ENCODE measurements at regions of chr3 and their contacts with region 1.

Region 1: DNA sequence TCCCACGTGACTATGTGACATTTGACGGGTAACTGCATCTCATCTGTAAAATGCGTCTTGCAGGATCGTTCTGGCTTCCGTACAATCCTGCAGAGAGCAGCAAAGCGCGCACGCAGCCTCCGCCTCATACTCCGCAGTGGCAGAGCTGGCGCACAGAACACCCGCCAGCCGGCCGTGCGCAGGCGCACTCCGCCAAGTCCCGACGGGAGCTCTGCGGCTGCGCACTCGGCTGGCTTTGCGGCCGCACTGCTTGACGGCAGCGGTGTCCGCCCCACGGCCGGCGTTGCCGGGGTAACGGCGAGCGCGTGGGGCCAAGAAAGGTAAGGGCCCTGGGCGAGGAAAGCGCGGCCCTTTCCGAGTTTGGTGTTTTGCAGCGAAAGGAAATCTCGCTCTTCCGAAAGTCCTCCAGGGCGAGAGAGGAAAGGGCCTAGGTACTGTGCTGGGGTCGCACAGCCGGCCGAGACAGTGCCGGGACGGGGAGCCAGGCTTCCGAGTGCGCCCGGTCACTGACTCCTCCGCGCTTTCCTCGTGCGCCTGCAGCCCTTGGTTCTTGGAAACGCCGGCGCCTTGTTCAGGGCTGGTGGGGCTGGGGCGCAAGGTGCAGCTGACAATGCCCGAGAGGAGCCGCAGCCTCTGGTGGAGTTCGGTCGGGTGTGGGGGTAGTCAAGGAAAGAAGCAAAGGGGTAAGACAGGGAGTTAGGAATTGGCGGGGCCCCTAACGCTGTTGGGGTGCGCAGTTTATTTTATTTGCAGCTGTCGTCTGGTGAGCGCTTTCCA is at the start of gene TSEN2:
- DNase-seq: peak; percentile 96 to 97 (median 96)
- ATAC-seq: peak; percentile 86
- H3K4me3 ChIP-seq: peak within 1 kb of the TSS; percentile 33
- H3K4me1 ChIP-seq: peaks cover 25% of the 10 kb centered on the region
- CTCF ChIP-seq: peak; percentile 26
- total RNA-seq, gene TSEN2: 18.2 to 29.7 (median 28.8) TPM

Region 2: DNA sequence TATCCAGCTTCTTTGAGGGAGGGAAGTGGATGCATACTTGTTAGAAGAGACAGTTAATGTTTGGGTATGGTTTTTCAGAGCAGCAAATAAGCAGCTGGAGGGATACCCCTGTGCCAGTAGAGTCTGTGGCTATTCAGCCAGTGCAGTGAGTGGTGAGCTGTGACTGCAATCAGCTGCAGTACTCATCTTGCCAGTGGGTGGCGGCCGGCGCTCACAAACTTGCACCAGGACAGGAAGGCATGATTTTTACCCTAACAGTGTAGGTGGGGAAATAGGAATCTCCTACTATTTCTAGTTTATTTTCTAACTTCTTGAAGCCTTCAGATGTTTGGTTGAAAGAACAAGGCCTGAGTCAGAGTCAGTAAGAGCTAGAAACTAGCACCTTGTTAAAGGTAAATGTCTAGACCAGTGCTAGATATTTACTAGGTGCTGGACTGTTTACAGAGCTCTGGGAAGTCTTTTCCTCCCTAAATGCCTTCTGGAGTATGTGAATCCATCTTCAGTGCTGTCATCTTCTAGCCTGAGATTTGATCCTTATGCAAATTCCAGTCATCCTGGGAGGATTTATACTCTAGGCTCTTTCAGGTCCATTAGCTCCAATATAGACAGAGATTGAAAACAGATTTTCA is 349.2 kb before region 1 on chr3:
- intact Hi-C with region 1: loop called (anchors 2 to 5 kb)
- DNase-seq: peak; percentile 75 to 89 (median 87)
- ATAC-seq: peak; percentile 93
- H3K4me3 ChIP-seq: no peak overlapping the region
- H3K4me1 ChIP-seq: no peaks in the 10 kb centered on the region
- CTCF ChIP-seq: peak; percentile 66

Region 3: DNA sequence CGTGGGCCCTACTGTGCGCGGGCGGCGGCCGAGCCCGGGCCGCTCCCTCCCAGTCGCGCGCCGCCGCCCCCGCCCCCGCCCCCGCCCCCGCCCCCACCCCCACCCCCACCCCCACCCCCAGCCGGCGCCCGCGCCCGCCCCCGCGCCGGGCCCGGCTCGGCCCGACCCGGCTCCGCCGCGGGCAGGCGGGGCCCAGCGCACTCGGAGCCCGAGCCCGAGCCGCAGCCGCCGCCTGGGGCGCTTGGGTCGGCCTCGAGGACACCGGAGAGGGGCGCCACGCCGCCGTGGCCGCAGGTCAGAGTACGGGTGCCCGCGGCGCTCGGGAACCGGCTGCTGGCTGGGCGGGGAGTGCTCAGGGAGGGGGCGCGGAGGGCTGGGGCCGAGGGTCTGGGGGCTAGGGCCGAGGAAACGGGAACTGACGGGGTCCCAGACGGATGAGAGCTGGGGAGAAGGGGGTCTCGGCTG is 196.6 kb before region 1 on chr3:
- intact Hi-C with region 1: loop called in 1 of 2 experiments (anchors 10 kb)
- DNase-seq: peak; percentile 62 to 82 (median 71)
- ATAC-seq: peak; percentile 70
- H3K4me3 ChIP-seq: peak overlapping the region; percentile 89
- H3K4me1 ChIP-seq: peaks cover 4% of the 10 kb centered on the region
- CTCF ChIP-seq: no peak

Region 4: DNA sequence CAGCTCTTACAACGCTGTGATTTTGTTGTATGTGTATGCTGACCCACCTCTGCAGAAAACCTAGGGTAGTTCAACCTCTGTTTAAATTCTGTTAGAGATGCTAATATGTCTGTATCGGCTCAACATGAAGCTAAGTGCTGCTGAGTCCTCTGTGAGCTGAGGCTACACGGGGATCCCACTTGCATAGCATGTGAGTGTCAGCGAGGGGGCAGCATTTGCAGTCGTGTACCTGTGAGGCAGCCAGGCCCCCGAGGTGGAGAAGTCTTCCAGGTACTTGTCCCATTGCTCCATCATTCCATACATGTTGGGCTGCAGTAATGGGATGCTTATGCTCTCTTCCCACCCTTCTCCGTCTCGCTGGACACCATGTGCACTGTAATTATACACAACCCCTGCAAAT is 57.2 kb after region 1 on chr3:
- intact Hi-C with region 1: loop called in 1 of 2 experiments (anchors 10 kb)
- DNase-seq: no peak
- ATAC-seq: no peak
- H3K4me3 ChIP-seq: no peak overlapping the region
- H3K4me1 ChIP-seq: no peaks in the 10 kb centered on the region
- CTCF ChIP-seq: no peak